ENCODE measurements at regions of chr19 and their contacts with region 1.

Region 1: GRCh38 chr19:12681074-12681951 is at the start of gene DHPS:
- DNase-seq: peak; percentile 100
- H3K4me3 ChIP-seq: peak within 1 kb of the TSS; percentile 77
- H3K27ac ChIP-seq: peak within 1 kb of the TSS; percentile 100
- H3K4me1 ChIP-seq: no peaks in the 10 kb centered on the region
- H3K27me3 ChIP-seq: no peaks in the 10 kb centered on the region
- CTCF ChIP-seq: no peak
- total RNA-seq, gene DHPS: 117 and 127 TPM in 2 replicates

Region 2: DNA sequence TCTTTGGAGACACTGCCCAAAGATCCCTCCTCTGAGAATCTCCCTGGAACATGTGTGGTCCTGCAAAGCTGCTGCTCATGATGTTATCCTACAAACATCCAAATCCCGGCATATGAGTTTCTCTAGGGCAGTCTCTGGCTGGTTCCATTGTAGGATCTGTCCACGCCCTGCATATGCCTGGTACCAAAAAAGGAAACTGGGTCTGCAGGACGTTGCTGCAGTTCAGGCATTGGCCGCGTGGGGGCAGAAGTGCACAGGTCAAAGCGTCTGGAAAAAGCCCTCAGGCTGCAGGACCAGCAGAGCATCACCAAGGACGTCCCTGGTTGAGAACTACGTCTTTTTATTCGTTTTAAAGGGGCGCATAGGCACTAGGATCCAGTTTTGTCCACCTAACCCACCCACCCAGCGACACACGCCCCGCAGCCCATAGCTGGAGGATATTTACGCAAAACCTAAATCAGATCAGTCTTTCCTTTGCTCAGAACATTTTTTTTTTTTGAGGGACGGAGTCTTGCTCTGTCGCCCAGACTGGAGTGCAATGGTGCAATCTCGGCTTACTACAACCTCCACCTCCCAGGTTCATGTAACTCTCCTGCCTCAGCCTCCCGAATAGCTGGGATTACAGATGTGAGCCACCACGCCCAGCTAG is 117.2 kb before region 1 on chr19:
- CTCF ChIA-PET with region 1: no interaction called
- POLR2A ChIA-PET with region 1: no interaction called
- intact Hi-C with region 1: loop called (anchors 1 kb)
- DNase-seq: peak; percentile 89
- H3K4me3 ChIP-seq: no peak overlapping the region
- H3K27ac ChIP-seq: no peak overlapping the region
- H3K4me1 ChIP-seq: no peaks in the 10 kb centered on the region
- H3K27me3 ChIP-seq: no peaks in the 10 kb centered on the region
- CTCF ChIP-seq: peak; percentile 99

Region 3: DNA sequence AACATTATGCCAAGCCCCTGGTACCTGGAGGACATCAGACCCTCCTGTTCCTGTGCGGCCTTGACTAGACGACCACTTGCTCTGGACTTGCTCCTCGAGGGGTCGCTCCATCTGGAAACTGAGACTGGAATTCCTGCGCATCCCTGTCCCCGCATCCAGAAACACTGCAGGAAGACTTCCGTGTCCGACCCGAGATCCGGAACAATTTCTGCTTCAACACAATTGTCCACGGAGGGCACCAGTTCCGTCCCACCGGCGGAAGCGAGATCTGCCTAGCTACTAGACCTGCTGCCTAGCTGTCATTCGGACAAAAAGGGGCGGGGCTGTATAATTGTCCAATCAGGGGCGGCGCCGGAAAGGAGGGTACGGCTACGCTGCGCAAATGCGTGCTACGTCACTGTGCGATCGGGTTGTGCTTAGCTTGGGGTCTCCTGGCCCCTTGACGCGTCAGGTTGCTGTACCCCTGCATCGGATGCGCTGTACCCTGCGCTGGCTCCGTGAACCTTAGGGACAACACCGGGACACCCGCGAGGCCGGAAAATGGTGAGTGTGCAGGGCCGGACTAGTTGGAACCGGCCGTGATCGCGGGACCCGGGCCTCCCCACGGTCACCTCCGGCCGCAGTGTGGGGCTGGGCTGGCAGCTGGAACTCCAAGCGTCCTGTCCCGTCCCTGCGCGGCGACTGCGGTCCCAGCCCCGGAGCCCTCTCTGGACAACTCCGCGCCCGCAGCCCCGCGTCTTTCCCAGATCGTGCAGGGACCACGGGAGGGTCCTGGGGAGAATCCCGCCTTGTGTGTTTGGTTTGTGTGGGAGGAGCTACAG is 70.6 kb before region 1 on chr19 and contains the starts of genes ZNF490 and ZNF791:
- CTCF ChIA-PET with region 1: no interaction called
- POLR2A ChIA-PET with region 1: no interaction called
- intact Hi-C with region 1: no loop called
- DNase-seq: peak; percentile 99
- H3K4me3 ChIP-seq: peak within 1 kb of the TSS; percentile 93
- H3K27ac ChIP-seq: peak within 1 kb of the TSS; percentile 94
- H3K4me1 ChIP-seq: no peaks in the 10 kb centered on the region
- H3K27me3 ChIP-seq: no peaks in the 10 kb centered on the region
- CTCF ChIP-seq: 0 out of 2 replicates have a peak, but pooled peaks have one; percentile 25
- total RNA-seq, gene ZNF490: 7.7 and 9.5 TPM in 2 replicates
- total RNA-seq, gene ZNF791: 22.9 and 26.0 TPM in 2 replicates

Region 4: GRCh38 chr19:12789904-12790619 is 108.7 kb after region 1 on chr19:
- CTCF ChIA-PET with region 1: interaction called, 3 read pairs
- POLR2A ChIA-PET with region 1: no interaction called
- intact Hi-C with region 1: loop called (anchors 5 kb)
- DNase-seq: peak; percentile 99
- H3K4me3 ChIP-seq: peak overlapping the region; percentile 59
- H3K27ac ChIP-seq: peak overlapping the region; percentile 98
- H3K4me1 ChIP-seq: peaks cover 34% of the 10 kb centered on the region
- H3K27me3 ChIP-seq: no peaks in the 10 kb centered on the region
- CTCF ChIP-seq: no peak

Measured in A673 (cell line).